CD8-positive, alpha-beta memory T cell (primary cell): ENCODE measurements at regions of chr2 and their contacts with region 1.

Region 1: DNA sequence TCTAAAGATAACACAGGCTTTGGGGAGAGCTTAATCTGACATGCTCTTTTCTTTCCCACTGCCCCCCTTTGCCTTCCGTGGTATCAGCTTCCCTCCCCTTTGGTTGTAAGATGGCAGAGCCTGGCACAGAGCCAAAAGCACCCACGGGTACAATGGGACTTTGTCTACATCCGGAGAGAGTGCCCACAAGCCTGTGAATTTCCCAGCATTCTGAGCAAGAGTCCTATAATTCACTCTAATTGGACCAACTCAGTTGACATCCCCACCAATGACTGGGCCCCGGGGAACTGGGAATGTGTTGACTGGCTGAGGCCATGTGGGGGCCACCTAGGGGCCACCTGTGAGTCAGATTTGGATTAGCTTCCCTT is 20.1 kb upstream of the C2orf72 start:
- DNase-seq: no peak
- H3K4me3 ChIP-seq: no peak overlapping the region
- H3K4me3 Mint-ChIP-seq: no peak overlapping the region
- H3K27ac ChIP-seq: no peak overlapping the region
- H3K27ac Mint-ChIP-seq: no peak overlapping the region
- H3K4me1 ChIP-seq: no peaks in the 10 kb centered on the region
- H3K4me1 Mint-ChIP-seq: no peaks in the 10 kb centered on the region
- H3K27me3 ChIP-seq: no peaks in the 10 kb centered on the region
- H3K27me3 Mint-ChIP-seq: peaks cover 14 to 46% of the 10 kb centered on the region in 2 donors

Region 2: GRCh38 chr2:230582851-230583283 is 434.3 kb before region 1 on chr2:
- CTCF ChIA-PET with region 1: no interaction called
- POLR2A ChIA-PET with region 1: interaction called, 10 read pairs
- DNase-seq: no peak
- H3K4me3 ChIP-seq: no peak overlapping the region
- H3K4me3 Mint-ChIP-seq: peak overlapping the region in 3 of 7 donors; percentile 1 to 27 (median 19)
- H3K27ac ChIP-seq: no peak overlapping the region
- H3K27ac Mint-ChIP-seq: peak overlapping the region in 2 of 8 donors; percentile 6 to 37
- H3K4me1 ChIP-seq: peaks cover 5% of the 10 kb centered on the region
- H3K4me1 Mint-ChIP-seq: peaks cover 7 to 19% (median 8%) of the 10 kb centered on the region in 3 donors
- H3K27me3 ChIP-seq: no peaks in the 10 kb centered on the region
- H3K27me3 Mint-ChIP-seq: peaks cover 0 to 3% of the 10 kb centered on the region in 2 donors

Region 3: GRCh38 chr2:231000211-231000904 is 16.9 kb before region 1 on chr2:
- CTCF ChIA-PET with region 1: no interaction called
- POLR2A ChIA-PET with region 1: no interaction called
- DNase-seq: no peak
- H3K4me3 ChIP-seq: no peak overlapping the region
- H3K4me3 Mint-ChIP-seq: no peak overlapping the region
- H3K27ac ChIP-seq: no peak overlapping the region
- H3K27ac Mint-ChIP-seq: no peak overlapping the region
- H3K4me1 ChIP-seq: no peaks in the 10 kb centered on the region
- H3K4me1 Mint-ChIP-seq: peaks cover 0 to 2% (median 0%) of the 10 kb centered on the region in 3 donors
- H3K27me3 ChIP-seq: peaks cover 7% of the 10 kb centered on the region
- H3K27me3 Mint-ChIP-seq: peaks cover 34 to 62% of the 10 kb centered on the region in 2 donors